ENCODE measurements at regions of chr3 and their contacts with region 1.

Region 1: GRCh38 chr3:124935264-124935663 is 713 bp upstream of the MUC13 start:
- DNase-seq: no peak
- H3K4me3 ChIP-seq: no peak overlapping the region
- H3K27ac ChIP-seq: no peak overlapping the region
- H3K4me1 ChIP-seq: no peaks in the 10 kb centered on the region
- H3K27me3 ChIP-seq: no peaks in the 10 kb centered on the region
- CTCF ChIP-seq: no peak
- POLR2A ChIP-seq: no peak

Region 2: GRCh38 chr3:125098611-125099291 is 163.5 kb after region 1 on chr3:
- intact Hi-C with region 1: loop called (anchors 10 kb)
- DNase-seq: no peak
- H3K4me3 ChIP-seq: no peak overlapping the region
- H3K27ac ChIP-seq: no peak overlapping the region
- H3K4me1 ChIP-seq: no peaks in the 10 kb centered on the region
- H3K27me3 ChIP-seq: no peaks in the 10 kb centered on the region
- CTCF ChIP-seq: no peak
- POLR2A ChIP-seq: no peak